HAP-1 (cell line): ENCODE measurements at regions of chrX and their contacts with region 1.

Region 1: DNA sequence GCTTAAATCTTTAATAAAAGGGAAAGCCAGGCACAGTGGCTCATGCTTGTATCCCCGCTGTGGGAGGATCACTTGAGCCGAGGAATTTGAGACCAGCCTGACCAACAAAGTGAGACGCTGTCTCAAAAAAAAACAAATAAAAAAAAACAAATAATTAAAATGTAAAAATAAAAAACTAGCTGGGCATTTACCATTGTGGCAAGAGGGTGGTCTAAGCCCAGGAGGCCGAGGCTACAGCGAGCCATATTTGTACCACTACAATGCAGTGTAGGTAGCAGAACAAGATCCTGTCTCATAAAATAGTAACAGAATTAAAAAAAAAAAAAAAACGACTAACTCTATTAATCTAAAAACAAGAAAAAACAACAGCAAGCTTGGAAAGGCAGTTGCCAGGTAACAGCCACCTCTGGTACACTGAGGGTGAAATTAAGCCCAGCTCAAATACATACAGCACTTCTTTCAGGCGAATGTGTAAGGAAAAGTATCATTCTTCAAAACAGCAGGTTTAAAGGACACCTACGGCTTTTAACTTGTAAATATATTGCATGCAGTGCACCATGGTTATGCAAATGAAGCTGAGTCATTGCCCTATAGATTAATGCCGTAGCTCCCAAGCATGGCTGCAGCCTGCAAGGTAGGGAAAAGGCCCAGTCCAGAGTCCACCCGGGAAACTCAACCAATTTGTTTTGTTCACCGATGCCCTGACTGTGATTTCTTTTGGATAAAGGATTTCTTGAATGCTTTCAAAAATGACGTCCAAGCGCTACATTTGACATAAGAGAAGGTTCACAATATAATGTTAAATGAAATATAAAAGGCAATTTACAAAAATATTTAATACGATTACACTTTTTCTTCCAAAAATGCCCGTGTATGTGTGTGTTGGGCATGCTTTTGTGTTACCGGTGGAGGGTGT is 14.5 kb upstream of the TXLNG start:
- DNase-seq: peak; percentile 85 to 98
- H3K4me3 ChIP-seq: no peak overlapping the region
- H3K4me1 ChIP-seq: peaks cover 21% of the 10 kb centered on the region
- H3K27me3 ChIP-seq: no peaks in the 10 kb centered on the region

Region 2: DNA sequence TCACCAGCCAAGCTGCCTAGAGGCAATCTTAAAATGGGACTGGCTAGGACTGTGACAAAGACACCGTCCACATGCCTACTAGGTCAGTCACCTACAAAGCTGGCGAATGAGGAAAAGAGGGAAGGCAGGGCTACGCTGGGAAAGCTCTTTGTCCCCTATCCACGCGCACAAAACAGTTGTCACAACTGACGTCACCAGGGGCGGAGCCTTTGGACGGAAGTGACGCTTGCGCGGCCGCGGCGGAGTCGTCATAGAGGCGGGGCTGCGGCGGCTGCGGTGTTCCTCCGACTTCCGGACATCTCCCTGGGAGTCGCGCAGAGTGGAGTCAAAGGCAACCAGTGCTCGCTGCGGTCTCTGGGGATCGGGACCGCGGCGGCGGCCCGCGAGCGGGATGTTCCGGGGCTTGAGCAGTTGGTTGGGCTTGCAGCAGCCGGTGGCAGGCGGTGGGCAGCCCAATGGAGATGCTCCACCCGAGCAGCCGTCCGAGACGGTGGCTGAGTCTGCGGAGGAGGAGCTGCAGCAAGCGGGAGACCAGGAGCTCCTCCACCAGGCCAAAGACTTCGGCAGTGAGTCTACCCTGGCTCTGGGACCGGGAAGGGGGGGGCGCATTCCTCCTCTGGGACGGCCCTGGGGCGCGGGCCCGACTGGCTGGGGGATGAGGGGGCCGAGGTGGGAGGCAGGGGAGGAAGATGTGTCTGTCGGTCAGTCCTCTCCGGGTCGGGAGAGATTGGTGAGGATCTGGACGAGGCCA is 52.2 kb before region 1 on chrX and contains the start of gene SYAP1:
- in situ Hi-C with region 1: loop called (anchors 5 kb)
- DNase-seq: peak; percentile 97 to 99
- H3K4me3 ChIP-seq: peak within 1 kb of the TSS; percentile 88
- H3K4me1 ChIP-seq: peaks cover 4% of the 10 kb centered on the region
- H3K27me3 ChIP-seq: no peaks in the 10 kb centered on the region